Mammary epithelial cell (primary cell): ENCODE measurements at regions of chr12 and their contacts with region 1.

Region 1: DNA sequence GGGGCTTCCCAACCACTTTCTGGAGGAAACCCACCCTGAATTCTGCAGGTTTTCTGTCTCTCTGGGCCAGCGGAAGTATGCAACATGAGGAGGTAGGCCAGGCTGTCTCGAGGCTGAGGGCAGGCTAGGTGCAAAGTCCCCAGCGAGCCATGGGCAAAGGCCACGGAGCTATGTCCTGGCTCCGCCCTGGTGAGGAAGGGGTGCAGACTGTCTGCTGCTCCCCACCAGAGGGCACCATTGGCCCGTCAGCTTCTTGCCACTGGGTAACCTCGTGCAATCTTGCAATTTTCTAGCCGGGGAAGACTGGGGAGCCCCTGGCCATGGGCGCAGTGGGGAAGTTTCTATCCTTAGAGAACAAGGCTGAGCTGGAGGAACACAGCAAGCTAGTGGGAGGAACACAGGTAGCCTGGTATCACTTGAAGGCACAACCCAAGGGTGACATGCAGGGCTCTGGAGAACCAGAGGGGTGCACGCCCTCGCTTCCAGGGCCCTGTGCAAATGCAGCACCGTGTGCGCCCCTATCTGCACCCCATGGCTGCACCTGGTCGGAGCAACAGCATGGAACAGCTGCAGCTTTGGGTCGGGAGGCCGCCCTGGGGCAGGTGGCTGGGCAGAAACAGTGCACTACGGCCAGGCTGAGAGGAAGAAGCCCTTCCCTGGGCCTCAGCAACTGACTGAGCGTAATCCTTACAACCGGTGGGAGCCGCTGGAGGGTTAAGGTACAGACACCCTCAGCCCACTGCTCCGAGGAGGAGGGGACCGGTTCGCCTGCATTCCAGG is 27.6 kb upstream of the RPLP0 start:
- DNase-seq: peak; percentile 61
- H3K4me3 ChIP-seq: peak overlapping the region in 2 of 3 experiments; percentile 6 to 19
- H3K27ac ChIP-seq: peak overlapping the region; percentile 95
- H3K4me1 ChIP-seq: peaks cover 92% of the 10 kb centered on the region
- H3K27me3 ChIP-seq: no peaks in the 10 kb centered on the region
- CTCF ChIP-seq: peak; percentile 77 to 91

Region 2: GRCh38 chr12:120247621-120248030 is 19.1 kb after region 1 on chr12:
- CTCF ChIA-PET with region 1: no interaction called
- dilution Hi-C with region 1: no loop called
- in situ Hi-C with region 1: no loop called
- intact Hi-C with region 1: loop called (anchors 1 kb)
- DNase-seq: peak; percentile 73
- H3K4me3 ChIP-seq: peak overlapping the region; percentile 8 to 33 (median 9)
- H3K27ac ChIP-seq: peak overlapping the region; percentile 90
- H3K4me1 ChIP-seq: peaks cover 80% of the 10 kb centered on the region
- H3K27me3 ChIP-seq: no peaks in the 10 kb centered on the region
- CTCF ChIP-seq: no peak

Region 3: DNA sequence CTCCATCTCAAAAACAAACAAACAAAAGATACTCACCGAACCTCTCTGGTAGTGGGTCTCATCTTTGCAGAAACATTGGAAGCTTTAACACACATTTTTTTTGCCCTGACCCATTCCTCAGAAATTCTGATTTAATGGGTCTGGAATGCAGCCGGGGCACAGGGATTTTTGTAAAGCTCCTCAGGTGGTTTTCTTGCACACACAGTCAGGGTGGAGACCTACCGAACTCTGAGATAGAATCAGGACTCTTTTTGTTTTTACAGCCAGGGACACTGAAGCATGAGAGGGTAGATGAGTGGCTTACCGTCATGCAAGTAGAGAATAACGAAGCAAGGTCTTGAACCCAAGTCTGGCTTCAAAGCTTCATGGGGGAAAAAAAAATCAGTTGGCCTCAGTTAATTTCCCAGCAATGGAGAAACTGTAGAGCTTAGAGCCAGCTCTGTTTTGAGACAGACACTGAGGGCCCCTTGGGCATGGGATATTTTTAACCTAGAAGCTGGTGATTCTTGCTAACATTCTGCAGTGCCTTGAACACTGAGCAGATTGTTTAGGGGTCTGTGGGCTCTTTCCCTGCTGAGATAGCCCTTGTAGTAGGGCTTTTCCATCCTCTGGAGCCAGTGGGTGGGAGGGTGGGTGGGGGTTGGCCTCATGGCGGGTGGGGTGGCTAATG is 58.5 kb after region 1 on chr12:
- CTCF ChIA-PET with region 1: interaction called, 10 read pairs
- dilution Hi-C with region 1: loop called (anchors 10 kb)
- in situ Hi-C with region 1: no loop called
- intact Hi-C with region 1: loop called (anchors 1 kb)
- DNase-seq: peak; percentile 44
- H3K4me3 ChIP-seq: no peak overlapping the region
- H3K27ac ChIP-seq: no peak overlapping the region
- H3K4me1 ChIP-seq: peaks cover 6% of the 10 kb centered on the region
- H3K27me3 ChIP-seq: no peaks in the 10 kb centered on the region
- CTCF ChIP-seq: no peak